Heart right ventricle (tissue), 16 donors: ENCODE measurements at regions of chr20 and their contacts with region 1.

Region 1: DNA sequence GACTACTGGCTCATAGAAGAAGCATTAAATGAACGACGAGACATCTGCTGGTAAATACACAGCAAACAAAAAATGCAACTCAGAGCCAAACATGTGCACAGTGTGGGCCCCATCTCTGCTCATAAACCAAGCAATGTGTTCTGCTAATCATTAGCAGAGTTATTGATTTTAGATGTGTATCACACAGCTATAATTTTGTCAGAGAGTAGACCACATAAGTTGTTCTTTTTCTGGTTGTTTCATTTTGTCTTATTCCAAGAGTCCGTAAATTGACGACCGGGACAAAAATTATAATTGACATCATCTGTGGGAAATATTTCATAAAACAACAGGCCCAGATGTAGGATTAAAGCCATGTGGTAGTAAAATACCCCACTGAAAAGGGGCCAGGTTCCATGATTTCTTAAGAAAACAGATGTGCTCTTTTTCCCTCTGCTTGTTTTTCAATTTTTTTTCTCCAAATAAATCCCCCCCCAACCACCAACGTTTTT is 423.6 kb downstream of the HAO1 start:
- DNase-seq: no peak
- ATAC-seq: peak in 1 of 8 donors; percentile 14
- H3K4me3 ChIP-seq: no peak overlapping the region
- H3K27ac ChIP-seq: peak overlapping the region in 2 of 10 donors; percentile 18 to 29
- H3K4me1 ChIP-seq: no peaks in the 10 kb centered on the region
- H3K27me3 ChIP-seq: no peaks in the 10 kb centered on the region
- CTCF ChIP-seq: no peak

Region 2: GRCh38 chr20:7449269-7449668 is 67.4 kb before region 1 on chr20:
- intact Hi-C with region 1: loop called in 1 of 10 experiments (anchors 2 kb)
- DNase-seq: no peak
- ATAC-seq: no peak
- H3K4me3 ChIP-seq: no peak overlapping the region
- H3K27ac ChIP-seq: no peak overlapping the region
- H3K4me1 ChIP-seq: no peaks in the 10 kb centered on the region
- H3K27me3 ChIP-seq: no peaks in the 10 kb centered on the region
- CTCF ChIP-seq: no peak

Region 3: DNA sequence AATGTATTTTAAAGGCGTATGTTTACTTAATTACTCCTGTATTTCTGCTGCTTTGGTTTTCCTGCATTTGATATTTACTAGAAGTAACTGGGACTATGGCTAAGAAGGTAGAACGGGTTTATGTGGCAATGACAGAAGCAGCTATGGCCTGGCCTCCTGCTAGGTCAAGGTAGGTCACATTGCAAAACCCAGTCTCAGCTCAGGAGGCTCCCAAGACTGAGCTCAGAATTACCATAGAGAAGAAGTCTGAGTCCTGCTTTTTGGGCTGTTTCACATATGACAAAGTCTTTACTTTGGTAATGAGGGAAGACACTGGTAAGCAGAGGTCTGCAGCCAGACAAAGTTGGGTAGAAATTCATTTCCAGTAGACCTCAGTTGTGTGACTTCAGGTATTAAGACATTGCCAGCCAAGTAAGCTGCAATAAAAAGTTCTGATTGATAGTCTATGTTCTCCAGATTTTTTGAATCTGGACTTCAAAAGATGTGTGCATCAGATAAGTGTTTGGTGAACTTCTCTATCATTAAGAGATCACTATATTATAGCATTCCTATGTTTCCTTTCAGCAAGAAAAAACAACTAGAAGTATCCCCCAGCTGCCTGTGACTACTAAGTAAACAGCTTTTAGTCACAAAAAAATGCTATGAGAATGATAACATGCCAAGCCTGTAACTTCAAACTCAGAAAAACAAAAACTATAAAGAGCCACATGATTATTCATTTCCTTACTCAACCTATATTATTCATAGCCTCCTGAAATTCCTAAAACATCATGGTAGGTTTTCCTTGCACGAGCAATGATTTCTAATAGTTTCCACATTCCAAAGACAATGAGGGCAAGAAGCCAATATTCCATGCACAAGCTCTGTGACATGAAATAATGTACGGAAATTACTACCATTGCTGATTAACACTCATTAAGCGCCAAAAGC is 111.3 kb after region 1 on chr20:
- intact Hi-C with region 1: no loop called
- DNase-seq: no peak
- ATAC-seq: peak in 1 of 8 donors; percentile 53
- H3K4me3 ChIP-seq: no peak overlapping the region
- H3K27ac ChIP-seq: no peak overlapping the region
- H3K4me1 ChIP-seq: peaks cover 0 to 24% (median 0%) of the 10 kb centered on the region in 9 donors
- H3K27me3 ChIP-seq: no peaks in the 10 kb centered on the region
- CTCF ChIP-seq: no peak